ENCODE measurements at regions of chr14 and their contacts with region 1.

Region 1: DNA sequence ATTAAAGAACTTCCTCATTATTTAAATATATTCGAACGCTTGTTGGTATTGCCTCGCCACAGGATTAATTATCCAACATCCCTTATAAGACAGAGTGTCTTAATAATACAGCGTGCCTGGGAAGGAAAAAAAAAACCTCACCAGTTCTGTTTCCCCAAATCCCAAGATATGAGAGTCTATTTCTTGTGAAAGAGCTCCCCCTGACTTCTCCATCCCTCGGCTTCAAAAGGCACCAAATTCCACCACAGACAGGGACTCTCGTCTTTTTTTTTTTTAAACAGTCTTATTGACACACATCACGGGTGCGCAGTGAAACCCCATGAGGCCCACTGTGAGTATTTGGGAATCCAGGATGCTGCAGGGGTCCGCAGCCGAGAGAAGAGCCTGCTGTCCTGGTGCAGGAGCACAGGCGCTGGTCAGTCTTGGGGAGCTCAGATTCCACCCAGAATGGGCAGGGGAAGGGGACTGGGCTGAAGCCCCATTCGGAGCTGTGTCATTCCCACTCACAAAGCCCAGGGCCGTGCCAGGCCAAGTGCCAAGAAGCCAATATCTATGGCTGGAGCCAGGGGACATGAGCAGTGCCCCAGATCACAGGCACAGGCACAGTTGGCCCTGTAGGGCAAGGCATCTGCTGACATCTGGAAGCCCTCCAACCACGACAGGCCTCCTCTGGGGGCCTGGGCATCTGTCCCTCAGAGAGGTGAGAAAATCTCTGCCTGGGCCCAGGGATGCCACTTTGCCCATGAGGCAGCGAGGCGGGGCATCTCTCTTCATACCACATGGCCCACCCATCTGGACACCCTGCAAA is 71.9 kb downstream of the BCL11B start:
- DNase-seq: no peak
- ATAC-seq: no peak
- H3K4me3 Mint-ChIP-seq: no peak overlapping the region
- H3K27ac Mint-ChIP-seq: 0 out of 2 replicates have a peak overlapping the region, but pooled peaks have one; percentile 4
- H3K4me1 Mint-ChIP-seq: peaks cover 30% of the 10 kb centered on the region
- H3K27me3 Mint-ChIP-seq: no peaks in the 10 kb centered on the region
- CTCF ChIP-seq: no peak

Region 2: DNA sequence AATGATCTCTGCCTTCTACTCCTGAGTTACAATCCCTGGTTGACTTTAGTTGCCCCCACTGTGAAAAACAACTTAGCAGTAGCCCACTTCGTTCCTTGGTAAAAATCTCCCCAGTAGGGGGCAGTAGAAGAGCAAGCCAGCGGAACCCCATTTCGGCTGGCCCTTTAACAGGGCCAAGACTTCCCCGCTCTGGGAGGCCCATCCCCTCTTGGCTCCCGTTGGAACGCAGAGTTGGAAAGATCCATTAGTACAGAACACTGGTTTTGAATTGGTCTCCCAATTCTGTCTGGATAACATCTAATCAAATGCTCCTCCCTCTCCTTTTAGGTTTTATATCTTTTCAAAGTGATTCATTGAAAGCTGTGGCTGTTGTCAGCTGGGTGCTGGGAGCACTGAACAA is 1061.4 kb before region 1 on chr14:
- CTCF ChIA-PET with region 1: no interaction called
- POLR2A ChIA-PET with region 1: interaction called, 10 read pairs
- DNase-seq: peak; percentile 67
- ATAC-seq: peak; percentile 85
- H3K4me3 Mint-ChIP-seq: no peak overlapping the region
- H3K27ac Mint-ChIP-seq: no peak overlapping the region
- H3K4me1 Mint-ChIP-seq: peaks cover 32% of the 10 kb centered on the region
- H3K27me3 Mint-ChIP-seq: no peaks in the 10 kb centered on the region
- CTCF ChIP-seq: peak; percentile 73

Region 3: DNA sequence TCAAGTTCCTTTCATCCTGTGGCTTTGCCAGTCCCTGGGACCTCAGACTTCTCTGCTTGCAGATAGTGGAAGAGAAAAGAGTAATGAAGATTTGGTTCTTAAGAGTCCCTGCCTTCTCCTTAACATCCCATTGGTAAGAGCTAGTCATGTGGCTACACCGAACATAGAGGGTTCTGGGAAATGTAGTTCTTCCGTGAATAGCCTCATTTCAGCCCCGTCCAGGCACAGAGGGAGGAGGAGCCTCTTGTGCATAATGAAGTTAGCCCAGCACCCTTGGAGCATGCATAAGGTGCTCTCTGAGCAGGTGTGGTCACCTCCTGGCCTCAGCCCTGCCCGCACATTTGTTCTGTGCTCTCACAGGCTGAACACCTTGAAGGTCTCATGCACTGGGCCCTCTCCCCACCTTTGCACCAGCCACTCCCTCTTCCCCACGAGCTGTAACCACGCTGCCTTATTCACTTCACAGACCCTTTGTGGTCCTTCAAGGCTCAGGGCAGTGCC is 62.0 kb before region 1 on chr14:
- CTCF ChIA-PET with region 1: no interaction called
- POLR2A ChIA-PET with region 1: no interaction called
- DNase-seq: no peak
- ATAC-seq: peak; percentile 81
- H3K4me3 Mint-ChIP-seq: peak overlapping the region; percentile 31; the same call in 1 of the 2 replicates
- H3K27ac Mint-ChIP-seq: no peak overlapping the region
- H3K4me1 Mint-ChIP-seq: peaks cover 32% of the 10 kb centered on the region
- H3K27me3 Mint-ChIP-seq: no peaks in the 10 kb centered on the region; the same call in 1 of the 2 replicates
- CTCF ChIP-seq: no peak

Measured in WTC11 (cell line).